Calu3 (cell line): ENCODE measurements at regions of chr3 and their contacts with region 1.

Region 1: GRCh38 chr3:98022978-98023820 is 11.9 kb downstream of the GABRR3 start:
- DNase-seq: peak; percentile 91
- H3K4me3 Mint-ChIP-seq: no peak overlapping the region
- H3K27ac Mint-ChIP-seq: no peak overlapping the region
- H3K4me1 Mint-ChIP-seq: no peaks in the 10 kb centered on the region
- H3K27me3 Mint-ChIP-seq: no peaks in the 10 kb centered on the region
- CTCF ChIP-seq: peak; percentile 82

Region 2: GRCh38 chr3:97793420-97794019 is 229.7 kb before region 1 on chr3:
- CTCF ChIA-PET with region 1: interaction called, 4 read pairs
- intact Hi-C with region 1: loop called (anchors 1 kb)
- DNase-seq: peak; percentile 22
- H3K4me3 Mint-ChIP-seq: no peak overlapping the region
- H3K27ac Mint-ChIP-seq: no peak overlapping the region
- H3K4me1 Mint-ChIP-seq: no peaks in the 10 kb centered on the region
- H3K27me3 Mint-ChIP-seq: no peaks in the 10 kb centered on the region
- CTCF ChIP-seq: peak; percentile 37

Region 3: GRCh38 chr3:97949111-97949485 is 74.1 kb before region 1 on chr3:
- CTCF ChIA-PET with region 1: no interaction called
- intact Hi-C with region 1: loop called (anchors 5 kb)
- DNase-seq: no peak
- H3K4me3 Mint-ChIP-seq: no peak overlapping the region
- H3K27ac Mint-ChIP-seq: no peak overlapping the region
- H3K4me1 Mint-ChIP-seq: no peaks in the 10 kb centered on the region
- H3K27me3 Mint-ChIP-seq: no peaks in the 10 kb centered on the region
- CTCF ChIP-seq: no peak

Region 4: GRCh38 chr3:97971677-97972567 is 51.3 kb before region 1 on chr3 and contains the start of gene RIOX2:
- CTCF ChIA-PET with region 1: interaction called, 7 read pairs
- intact Hi-C with region 1: loop called (anchors 2 kb)
- DNase-seq: peak; percentile 74
- H3K4me3 Mint-ChIP-seq: peak within 1 kb of the TSS; percentile 95
- H3K27ac Mint-ChIP-seq: peak within 1 kb of the TSS; percentile 97
- H3K4me1 Mint-ChIP-seq: peaks cover 15% of the 10 kb centered on the region
- H3K27me3 Mint-ChIP-seq: no peaks in the 10 kb centered on the region
- CTCF ChIP-seq: no peak
- total RNA-seq, gene RIOX2: 32.1 and 36.3 TPM in 2 replicates

Region 5: DNA sequence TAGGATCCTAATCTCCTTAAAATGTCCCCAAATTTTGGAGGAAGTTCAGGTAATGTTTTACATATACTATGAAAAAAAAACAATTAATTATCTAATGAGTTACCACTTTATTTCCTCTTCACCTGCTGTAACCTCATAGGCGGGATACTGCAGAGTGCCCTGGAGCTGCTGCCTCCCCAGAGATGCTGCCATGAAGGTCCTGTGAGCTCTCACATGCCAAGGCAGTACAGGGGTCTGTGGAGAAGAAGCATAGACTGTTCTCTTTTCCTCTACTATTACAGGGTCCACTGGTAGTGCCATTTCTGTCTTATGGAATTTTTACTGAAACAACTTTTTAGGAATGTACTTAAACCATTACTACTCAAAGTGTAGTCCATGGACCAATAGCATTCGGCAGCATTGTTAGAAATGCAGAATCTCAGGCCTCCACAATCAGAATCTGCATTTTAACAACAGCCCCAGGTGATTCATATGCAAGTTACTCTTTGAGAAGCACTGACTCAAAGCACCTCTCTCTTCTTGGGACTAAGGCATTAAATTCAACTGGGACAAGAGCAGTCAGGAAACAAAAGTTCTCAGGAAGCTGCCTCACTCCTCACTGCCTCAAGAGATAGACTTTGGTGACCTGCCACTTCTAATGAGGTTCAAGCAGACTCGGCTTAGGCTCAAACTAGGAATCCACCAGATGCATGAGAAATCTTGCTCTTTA is 600.5 kb after region 1 on chr3:
- CTCF ChIA-PET with region 1: no interaction called
- intact Hi-C with region 1: no loop called
- DNase-seq: no peak
- H3K4me3 Mint-ChIP-seq: no peak overlapping the region
- H3K27ac Mint-ChIP-seq: no peak overlapping the region
- H3K4me1 Mint-ChIP-seq: no peaks in the 10 kb centered on the region
- H3K27me3 Mint-ChIP-seq: no peaks in the 10 kb centered on the region
- CTCF ChIP-seq: no peak